GM12878 (cell line): ENCODE measurements at regions of chr12 and their contacts with region 1.

Region 1: GRCh38 chr12:124774462-124775167 is 89.0 kb downstream of the SCARB1 start:
- DNase-seq: peak; percentile 100
- ATAC-seq: peak; percentile 79
- H3K4me3 ChIP-seq: peak overlapping the region; percentile 34; the same call in 1 of the 2 replicates
- H3K27ac ChIP-seq: peak overlapping the region; percentile 98
- H3K4me1 ChIP-seq: peaks cover 70% of the 10 kb centered on the region
- H3K27me3 ChIP-seq: no peaks in the 10 kb centered on the region
- CTCF ChIP-seq: 0 out of 6 replicates have a peak, but pooled peaks of 1 of the 3 experiments have one; percentile 2
- EP300 ChIP-seq: peak; percentile 91 to 94
- POLR2A ChIP-seq: peak; percentile 41; the same call in 1 of the 2 replicates
- RAD21 ChIP-seq: peak; percentile 22

Region 2: DNA sequence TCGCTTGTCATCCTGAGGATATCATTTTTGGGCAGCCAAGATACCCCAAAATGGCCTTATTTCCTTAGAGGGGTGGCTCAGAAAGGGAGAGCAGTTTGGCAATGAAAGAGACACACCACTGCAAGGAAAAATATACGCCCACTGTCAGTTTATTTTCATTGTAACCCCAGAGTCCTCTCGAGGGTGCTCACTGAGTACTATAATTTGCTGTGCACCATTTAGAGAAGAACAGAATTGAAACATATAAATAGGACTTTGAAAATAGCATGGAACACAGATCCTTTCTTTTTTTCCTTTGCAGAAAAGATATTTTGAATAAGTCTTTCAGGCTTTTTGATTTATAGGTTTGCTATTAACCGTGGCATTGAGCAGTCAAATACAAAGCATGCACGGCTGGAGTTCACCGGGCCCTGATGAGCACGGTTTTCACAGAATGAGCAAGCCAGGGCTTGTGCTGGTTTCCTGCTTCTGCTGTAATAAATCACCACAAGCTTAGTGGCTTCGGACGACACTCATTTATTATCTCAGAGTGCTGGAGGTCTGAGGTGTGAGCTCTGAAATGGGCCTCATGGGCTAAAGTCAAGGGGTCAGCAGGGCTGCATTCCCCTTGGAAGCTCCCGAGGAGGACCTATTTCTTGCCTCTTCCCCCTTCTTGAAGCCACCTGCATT is 649.3 kb before region 1 on chr12:
- CTCF ChIA-PET with region 1: no interaction called
- POLR2A ChIA-PET with region 1: no interaction called
- RAD21 ChIA-PET with region 1: no interaction called
- SMC1A ChIA-PET with region 1: no interaction called
- in situ Hi-C with region 1: no loop called
- intact Hi-C with region 1: loop called (anchors 1 kb)
- DNase-seq: peak; percentile 72
- ATAC-seq: peak; percentile 93
- H3K4me3 ChIP-seq: no peak overlapping the region
- H3K27ac ChIP-seq: peak overlapping the region; percentile 7
- H3K4me1 ChIP-seq: peaks cover 35% of the 10 kb centered on the region
- H3K27me3 ChIP-seq: no peaks in the 10 kb centered on the region
- CTCF ChIP-seq: no peak
- EP300 ChIP-seq: peak; percentile 58 to 82; a peak in 2 of 4 replicates
- POLR2A ChIP-seq: no peak
- RAD21 ChIP-seq: 0 out of 2 replicates have a peak, but pooled peaks have one; percentile 3

Region 3: DNA sequence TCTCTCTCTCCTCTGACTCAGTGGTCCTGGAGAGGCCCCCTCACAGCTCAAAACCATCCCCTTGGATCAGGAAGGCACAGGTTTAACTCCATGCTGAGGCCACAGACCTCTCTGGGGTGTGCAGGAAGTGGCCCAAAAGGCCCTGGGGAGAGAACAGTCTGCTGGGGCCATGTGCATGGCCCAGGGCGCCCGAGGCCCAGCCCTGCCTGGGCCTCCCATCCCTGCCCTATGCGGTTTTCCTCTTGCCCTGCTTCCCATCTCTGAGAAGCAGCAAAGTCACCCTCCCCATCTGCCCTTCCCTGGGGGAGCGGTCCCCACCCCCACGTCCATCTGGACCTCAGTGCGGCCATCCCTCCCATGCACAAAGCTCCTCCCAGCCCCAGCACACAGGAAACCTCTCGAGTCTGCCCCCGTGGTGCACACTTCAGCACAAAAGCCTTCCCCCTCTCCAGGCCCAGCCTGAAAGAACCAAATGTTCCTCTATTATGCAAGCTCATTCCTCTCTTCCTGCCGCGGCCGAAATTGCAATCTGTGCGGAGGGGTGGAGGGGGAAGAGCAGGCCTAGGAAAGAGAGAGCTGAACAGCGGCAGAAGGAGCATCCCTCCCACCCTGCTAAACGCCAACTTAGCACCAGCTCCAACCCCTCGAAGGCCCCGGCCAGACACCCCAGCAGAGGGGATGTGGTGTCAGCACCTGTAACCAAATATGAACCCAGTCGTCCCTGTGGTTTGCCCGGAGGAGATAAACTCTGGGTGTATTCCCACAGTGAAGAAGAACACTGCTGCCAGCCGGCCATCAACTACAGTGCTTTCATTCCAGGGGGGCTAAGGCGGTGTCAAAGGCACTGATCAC is 19.4 kb before region 1 on chr12:
- CTCF ChIA-PET with region 1: no interaction called
- POLR2A ChIA-PET with region 1: no interaction called
- RAD21 ChIA-PET with region 1: no interaction called
- SMC1A ChIA-PET with region 1: no interaction called
- in situ Hi-C with region 1: no loop called
- intact Hi-C with region 1: no loop called
- DNase-seq: no peak
- ATAC-seq: peak; percentile 34
- H3K4me3 ChIP-seq: no peak overlapping the region
- H3K27ac ChIP-seq: no peak overlapping the region
- H3K4me1 ChIP-seq: peaks cover 9% of the 10 kb centered on the region
- H3K27me3 ChIP-seq: no peaks in the 10 kb centered on the region
- CTCF ChIP-seq: no peak
- EP300 ChIP-seq: no peak
- POLR2A ChIP-seq: no peak
- RAD21 ChIP-seq: no peak

Region 4: DNA sequence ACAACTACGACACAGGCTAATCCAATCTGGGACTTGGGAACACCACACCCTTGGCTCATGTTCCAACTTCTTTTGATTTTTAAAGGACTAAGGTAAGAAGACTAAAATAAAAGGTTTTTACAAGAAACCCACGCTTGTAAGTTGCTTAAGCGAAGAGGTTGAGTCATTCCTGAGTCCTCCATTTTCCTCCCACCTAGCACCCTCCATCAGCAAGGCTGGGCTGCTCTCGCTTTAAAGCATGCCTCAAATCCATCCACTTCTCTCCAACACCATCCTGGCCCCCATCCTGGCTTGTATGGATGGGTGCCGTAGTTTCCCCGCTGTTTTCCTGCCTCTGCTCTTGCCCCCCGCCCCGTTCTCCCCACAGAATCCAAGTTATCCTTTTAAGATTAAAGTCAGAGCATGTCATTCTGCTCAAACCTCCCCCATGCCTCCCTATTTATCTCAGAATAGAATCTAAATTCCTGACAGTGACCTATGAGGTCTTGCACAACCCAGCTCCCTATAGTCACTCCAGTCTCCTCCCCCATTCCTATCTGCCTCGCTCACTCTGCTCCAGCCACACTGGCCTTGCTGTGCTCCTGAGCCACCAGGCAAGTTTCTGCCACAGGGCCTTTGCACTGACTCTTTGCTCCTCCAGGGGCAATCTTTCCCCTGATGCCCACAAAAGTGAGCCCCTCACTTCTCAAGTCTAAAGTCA is 54.5 kb after region 1 on chr12:
- CTCF ChIA-PET with region 1: interaction called, 4 read pairs
- POLR2A ChIA-PET with region 1: no interaction called
- RAD21 ChIA-PET with region 1: interaction called, 12 read pairs
- SMC1A ChIA-PET with region 1: interaction called, 13 read pairs
- in situ Hi-C with region 1: no loop called
- intact Hi-C with region 1: loop called (anchors 2 kb)
- DNase-seq: no peak
- ATAC-seq: 0 out of 3 replicates have a peak, but pooled peaks have one; percentile 9
- H3K4me3 ChIP-seq: no peak overlapping the region
- H3K27ac ChIP-seq: peak overlapping the region; percentile 20; the same call in 1 of the 2 replicates
- H3K4me1 ChIP-seq: peaks cover 17% of the 10 kb centered on the region
- H3K27me3 ChIP-seq: no peaks in the 10 kb centered on the region
- CTCF ChIP-seq: no peak
- EP300 ChIP-seq: no peak
- POLR2A ChIP-seq: no peak
- RAD21 ChIP-seq: no peak

Region 5: DNA sequence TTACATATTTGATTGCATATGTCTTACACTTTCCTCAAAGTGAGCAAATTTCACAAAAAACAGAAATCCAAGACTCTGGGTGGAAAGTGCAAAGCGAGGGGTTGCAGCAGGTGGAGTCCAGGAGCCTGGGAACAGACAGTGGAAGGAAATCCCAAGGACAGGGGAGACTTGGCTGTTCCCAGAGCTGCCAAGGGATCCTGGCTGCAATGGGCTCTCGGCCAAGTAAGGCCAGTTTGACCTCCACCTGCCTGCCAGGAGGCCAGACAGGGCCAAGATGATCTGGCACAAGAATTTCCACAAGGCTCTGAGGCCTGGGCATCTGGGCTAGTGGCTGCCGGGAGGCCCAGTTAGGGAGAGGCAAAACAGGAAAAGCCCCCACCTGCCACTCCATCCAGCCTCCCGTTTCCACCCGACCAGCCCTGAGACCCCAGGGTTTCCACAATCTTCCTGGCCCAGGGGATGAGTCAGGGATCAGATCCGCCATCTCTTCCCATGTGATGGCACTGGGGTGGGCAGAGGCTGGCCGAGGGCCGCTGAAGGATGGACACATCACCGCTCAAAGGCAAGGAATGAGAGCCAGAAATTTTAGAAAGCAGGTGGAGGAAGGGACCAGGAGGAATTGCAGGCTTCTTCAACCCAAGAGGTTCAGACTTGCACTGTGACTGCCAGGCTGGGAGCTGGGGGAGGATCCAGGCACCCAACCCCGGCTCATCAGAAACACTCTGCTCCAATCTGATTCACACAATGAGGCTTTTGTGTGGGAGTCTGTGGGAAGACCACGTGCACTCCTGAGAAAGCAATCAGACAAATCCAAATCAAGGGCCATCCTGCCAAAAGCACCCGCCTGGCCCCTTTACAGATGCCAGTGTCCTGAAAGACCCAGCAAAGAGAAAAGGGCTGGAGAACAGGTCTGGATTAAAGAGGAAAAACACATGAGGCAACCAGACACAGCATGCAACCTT is 72.8 kb after region 1 on chr12:
- CTCF ChIA-PET with region 1: no interaction called
- POLR2A ChIA-PET with region 1: no interaction called
- RAD21 ChIA-PET with region 1: no interaction called
- SMC1A ChIA-PET with region 1: no interaction called
- in situ Hi-C with region 1: no loop called
- intact Hi-C with region 1: no loop called
- DNase-seq: no peak
- ATAC-seq: no peak
- H3K4me3 ChIP-seq: no peak overlapping the region
- H3K27ac ChIP-seq: no peak overlapping the region
- H3K4me1 ChIP-seq: no peaks in the 10 kb centered on the region
- H3K27me3 ChIP-seq: no peaks in the 10 kb centered on the region
- CTCF ChIP-seq: no peak
- EP300 ChIP-seq: no peak
- POLR2A ChIP-seq: no peak
- RAD21 ChIP-seq: no peak

Region 6: DNA sequence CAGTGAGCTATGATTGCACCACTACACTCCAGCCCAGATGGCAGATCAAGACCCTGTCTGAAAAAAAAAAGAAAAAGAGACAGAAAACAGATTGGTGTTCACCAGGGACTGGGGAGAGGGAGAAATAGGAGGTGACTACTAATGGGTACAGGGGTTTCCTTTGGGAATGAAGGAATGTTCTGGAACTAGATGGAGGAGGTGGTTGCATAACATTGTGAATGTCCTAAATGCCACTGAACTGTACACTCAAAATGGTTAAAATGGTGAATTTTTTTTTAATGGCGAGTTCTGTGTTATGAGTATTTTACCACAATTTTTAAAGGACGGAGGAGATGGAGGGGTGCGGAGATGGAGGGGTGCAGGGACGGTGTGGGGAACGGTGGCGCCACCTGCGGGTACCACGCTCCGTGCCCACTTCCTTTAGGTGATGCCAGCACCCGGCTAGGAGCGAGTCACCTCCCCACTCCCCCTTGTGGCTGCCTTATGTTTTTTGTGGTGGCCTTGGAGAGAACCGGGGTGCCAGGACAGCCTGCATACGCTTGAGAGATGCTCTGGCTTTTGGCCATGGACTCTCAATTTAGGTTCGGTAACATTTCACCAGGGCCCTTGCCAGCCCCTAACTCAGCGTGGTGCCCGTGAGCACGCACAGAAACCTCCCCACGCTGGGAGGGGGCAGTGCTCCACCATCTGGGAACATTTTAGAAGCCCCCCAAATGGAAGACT is 123.7 kb after region 1 on chr12:
- CTCF ChIA-PET with region 1: interaction called, 11 read pairs
- POLR2A ChIA-PET with region 1: interaction called, 9 read pairs
- RAD21 ChIA-PET with region 1: interaction called, 40 read pairs
- SMC1A ChIA-PET with region 1: interaction called, 31 read pairs
- in situ Hi-C with region 1: no loop called
- intact Hi-C with region 1: loop called (anchors 2 kb)
- DNase-seq: no peak
- ATAC-seq: peak; percentile 74
- H3K4me3 ChIP-seq: no peak overlapping the region; the same call in 1 of the 2 replicates
- H3K27ac ChIP-seq: peak overlapping the region; percentile 27
- H3K4me1 ChIP-seq: peaks cover 32% of the 10 kb centered on the region
- H3K27me3 ChIP-seq: no peaks in the 10 kb centered on the region
- CTCF ChIP-seq: peak; percentile 72 to 81 (median 78)
- EP300 ChIP-seq: no peak
- POLR2A ChIP-seq: no peak
- RAD21 ChIP-seq: peak; percentile 60

Region 7: DNA sequence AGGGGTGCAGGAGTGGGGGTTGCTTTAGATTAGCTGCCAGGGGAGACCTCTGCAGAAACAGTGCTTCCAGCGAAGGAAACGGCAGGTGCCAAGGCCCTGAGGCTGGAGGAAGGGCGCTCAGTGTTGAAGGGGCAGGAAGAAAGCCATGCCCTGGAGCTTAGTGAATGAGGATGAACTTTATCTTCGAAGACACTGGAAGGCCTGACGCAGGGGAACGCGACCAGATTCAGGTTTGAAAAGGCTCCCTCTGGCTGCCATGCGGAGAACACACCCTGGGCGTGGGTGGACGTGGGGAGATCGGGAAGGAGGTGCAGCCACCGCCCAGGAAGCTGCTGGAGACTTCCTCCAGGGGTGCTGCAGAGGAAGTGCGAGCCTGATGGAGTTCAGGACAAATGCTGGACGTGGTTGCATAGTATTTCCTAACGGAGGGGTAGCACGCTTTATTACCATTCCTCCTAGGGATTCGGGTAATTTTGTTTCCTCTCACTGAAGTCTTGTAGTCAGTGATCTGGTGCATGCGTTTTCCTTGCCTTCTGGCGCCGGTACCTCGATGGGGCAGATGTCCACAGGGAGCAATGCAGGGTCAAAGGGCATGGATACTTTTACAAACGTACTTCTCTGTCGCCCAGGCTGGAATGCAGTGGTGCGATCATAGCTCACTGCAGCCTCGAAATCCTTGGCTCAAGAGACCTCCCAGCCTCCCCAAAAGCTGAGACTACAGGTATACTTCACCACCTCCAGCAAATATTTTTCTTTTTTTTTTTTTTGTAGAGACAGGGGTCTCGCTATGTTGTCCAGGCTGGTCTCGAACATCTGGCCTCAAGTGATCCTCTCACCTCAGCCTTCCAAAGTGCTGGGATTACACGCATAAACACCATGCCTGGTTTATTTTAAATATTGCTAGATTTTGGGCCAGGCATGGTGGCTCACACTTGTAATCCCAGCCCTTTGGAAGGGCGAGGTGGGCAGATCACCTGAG is 166.2 kb after region 1 on chr12:
- CTCF ChIA-PET with region 1: interaction called, 7 read pairs
- POLR2A ChIA-PET with region 1: interaction called, 3 read pairs
- RAD21 ChIA-PET with region 1: interaction called, 10 read pairs
- SMC1A ChIA-PET with region 1: interaction called, 4 read pairs
- in situ Hi-C with region 1: no loop called
- intact Hi-C with region 1: no loop called
- DNase-seq: peak; percentile 82
- ATAC-seq: peak; percentile 74
- H3K4me3 ChIP-seq: peak overlapping the region; percentile 68
- H3K27ac ChIP-seq: peak overlapping the region; percentile 97
- H3K4me1 ChIP-seq: peaks cover 17% of the 10 kb centered on the region
- H3K27me3 ChIP-seq: no peaks in the 10 kb centered on the region
- CTCF ChIP-seq: peak; percentile 92 to 98 (median 93)
- EP300 ChIP-seq: no peak
- POLR2A ChIP-seq: peak; percentile 68
- RAD21 ChIP-seq: peak; percentile 63